ENCODE measurements at regions of chr1 and their contacts with region 1.

Region 1: GRCh38 chr1:227482023-227482299 is 81.4 kb upstream of the ZNF678 start:
- DNase-seq: no peak
- ATAC-seq: no peak
- H3K4me3 Mint-ChIP-seq: no peak overlapping the region
- H3K27ac Mint-ChIP-seq: no peak overlapping the region
- H3K4me1 Mint-ChIP-seq: no peaks in the 10 kb centered on the region
- H3K27me3 Mint-ChIP-seq: peaks cover 14% of the 10 kb centered on the region
- CTCF ChIP-seq: no peak

Region 2: GRCh38 chr1:227469708-227470107 is 12.3 kb before region 1 on chr1:
- CTCF ChIA-PET with region 1: interaction called, 17 read pairs
- POLR2A ChIA-PET with region 1: no interaction called
- intact Hi-C with region 1: no loop called
- DNase-seq: no peak
- ATAC-seq: no peak
- H3K4me3 Mint-ChIP-seq: no peak overlapping the region
- H3K27ac Mint-ChIP-seq: no peak overlapping the region
- H3K4me1 Mint-ChIP-seq: no peaks in the 10 kb centered on the region
- H3K27me3 Mint-ChIP-seq: peaks cover 4% of the 10 kb centered on the region
- CTCF ChIP-seq: no peak

Region 3: DNA sequence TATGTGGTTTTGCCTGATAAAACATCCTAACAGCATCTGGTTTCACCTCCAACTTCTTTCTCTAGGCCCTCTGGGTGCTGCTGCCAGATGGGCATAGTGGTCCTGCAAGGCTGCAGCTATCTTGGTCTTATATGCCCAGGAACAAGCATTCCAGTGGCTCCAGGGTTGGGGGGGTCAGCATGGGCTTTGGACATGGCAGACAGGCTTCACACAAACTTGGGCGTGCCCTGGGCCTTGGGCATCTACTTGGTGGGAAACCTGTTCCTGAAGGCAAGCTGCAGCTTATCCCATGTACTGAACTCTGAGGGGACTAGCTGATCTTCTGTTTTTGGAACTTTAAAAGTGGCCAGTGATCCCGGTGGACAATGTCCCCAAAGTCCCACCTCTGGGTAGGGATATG is 26.5 kb after region 1 on chr1:
- CTCF ChIA-PET with region 1: no interaction called
- POLR2A ChIA-PET with region 1: no interaction called
- intact Hi-C with region 1: no loop called
- DNase-seq: no peak
- ATAC-seq: no peak
- H3K4me3 Mint-ChIP-seq: no peak overlapping the region
- H3K27ac Mint-ChIP-seq: no peak overlapping the region
- H3K4me1 Mint-ChIP-seq: no peaks in the 10 kb centered on the region
- H3K27me3 Mint-ChIP-seq: peaks cover under 1% of the 10 kb centered on the region
- CTCF ChIP-seq: no peak

Region 4: DNA sequence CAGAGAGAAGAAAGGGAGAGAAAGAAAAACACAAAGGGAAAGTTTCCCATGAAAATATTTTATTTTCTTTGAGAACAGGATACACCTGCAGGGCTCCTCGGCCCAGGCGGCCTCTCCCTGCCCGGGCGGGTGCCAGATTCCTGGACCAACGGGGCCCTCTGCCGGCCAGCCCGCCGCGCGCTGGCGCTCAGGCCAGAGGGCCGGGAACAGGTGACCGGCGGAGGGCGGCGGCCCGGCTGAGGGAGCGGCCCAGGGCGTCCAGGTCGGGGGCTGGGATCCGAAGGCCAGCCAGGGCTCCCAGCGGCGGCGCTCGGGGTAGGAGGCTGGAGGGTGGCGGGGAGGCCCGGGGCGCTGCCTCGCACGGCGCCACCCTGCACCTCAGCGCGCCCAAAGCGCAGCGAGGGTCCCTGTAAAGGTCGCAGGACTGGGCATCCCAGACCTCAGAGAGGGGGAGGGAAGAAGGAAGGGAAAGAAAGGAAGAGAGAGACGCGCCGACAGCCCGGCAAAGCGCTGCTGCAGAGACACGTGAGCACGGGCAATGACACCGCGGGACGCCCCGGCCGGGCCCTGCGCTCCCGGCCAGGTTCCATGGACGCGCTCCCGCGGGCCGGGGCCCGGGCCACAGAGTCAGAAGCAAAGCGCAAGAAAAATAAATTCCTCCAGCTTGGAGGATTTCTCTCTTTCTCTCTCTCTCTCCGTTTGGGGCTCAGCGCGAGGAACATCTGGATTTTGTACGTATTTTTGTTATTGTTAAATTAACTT is 464.8 kb after region 1 on chr1:
- CTCF ChIA-PET with region 1: interaction called, 3 read pairs
- POLR2A ChIA-PET with region 1: no interaction called
- intact Hi-C with region 1: loop called (anchors 5 kb)
- DNase-seq: peak; percentile 62
- ATAC-seq: peak; percentile 81
- H3K4me3 Mint-ChIP-seq: peak overlapping the region; percentile 44
- H3K27ac Mint-ChIP-seq: no peak overlapping the region
- H3K4me1 Mint-ChIP-seq: peaks cover 2% of the 10 kb centered on the region
- H3K27me3 Mint-ChIP-seq: peaks cover 18% of the 10 kb centered on the region
- CTCF ChIP-seq: peak; percentile 76

Region 5: DNA sequence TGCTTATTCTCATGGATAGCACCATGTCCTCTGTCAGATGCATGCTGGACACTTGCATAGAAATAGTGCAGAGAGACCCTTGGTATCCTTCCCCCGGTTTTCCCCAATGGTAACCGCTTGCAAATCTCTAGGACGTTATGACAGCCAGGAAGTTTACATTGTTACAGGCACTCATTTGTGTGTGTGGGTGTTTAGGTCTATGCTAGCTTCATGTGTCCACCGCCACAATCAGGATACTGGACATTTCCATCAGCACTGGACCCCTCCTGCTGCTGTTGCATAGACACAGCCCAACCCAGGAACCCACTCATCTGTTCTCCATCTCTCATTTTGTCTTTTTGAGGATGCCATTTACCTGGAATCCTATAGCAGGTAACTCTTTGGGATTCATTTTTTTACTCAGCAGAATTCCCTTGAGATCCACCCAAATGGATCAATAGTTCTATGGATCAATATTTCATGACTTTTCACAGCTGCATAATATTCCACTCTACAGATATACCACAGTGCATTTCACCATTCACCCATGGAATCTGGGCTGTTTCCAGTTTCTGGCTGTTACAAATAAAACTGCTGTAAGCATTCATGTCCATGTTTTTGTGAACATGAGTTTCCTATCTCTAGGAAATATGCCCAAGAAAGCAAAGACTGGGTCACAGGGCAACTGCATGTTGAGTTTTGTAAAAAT is 472.3 kb after region 1 on chr1:
- CTCF ChIA-PET with region 1: interaction called, 17 read pairs
- POLR2A ChIA-PET with region 1: interaction called, 3 read pairs
- intact Hi-C with region 1: loop called (anchors 5 kb)
- DNase-seq: no peak
- ATAC-seq: no peak
- H3K4me3 Mint-ChIP-seq: no peak overlapping the region
- H3K27ac Mint-ChIP-seq: no peak overlapping the region
- H3K4me1 Mint-ChIP-seq: peaks cover 3% of the 10 kb centered on the region
- H3K27me3 Mint-ChIP-seq: peaks cover 28% of the 10 kb centered on the region
- CTCF ChIP-seq: peak; percentile 25

Measured in activated CD8-positive, alpha-beta T cell treated with anti-CD3 and anti-CD28 coated beads for 36 hours (primary cell).